Heart right ventricle (tissue), 16 donors: ENCODE measurements at regions of chr15 and their contacts with region 1.

Region 1: DNA sequence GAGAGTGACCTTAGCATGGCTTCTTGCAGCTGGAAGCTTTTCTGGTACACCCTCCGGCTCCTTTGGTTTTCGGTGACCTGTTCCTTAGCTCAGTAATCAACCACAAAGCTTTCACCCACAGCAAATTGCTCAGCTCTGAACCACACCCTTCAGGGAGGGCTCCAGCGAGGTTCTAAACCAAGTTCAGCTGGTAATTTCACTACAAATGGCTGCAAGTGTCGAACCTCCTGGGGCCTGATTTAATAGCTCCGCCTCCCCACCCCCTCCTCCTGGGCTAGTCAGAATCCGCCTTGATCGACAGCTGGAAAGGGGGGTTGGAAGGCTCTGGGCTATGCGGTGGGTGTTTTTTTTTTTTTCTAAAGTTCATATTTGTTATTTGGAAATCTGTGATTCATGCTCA is 150.9 kb upstream of the MCTP2 start:
- DNase-seq: peak; percentile 35 to 36
- ATAC-seq: peak; percentile 41 to 82 (median 60)
- H3K4me3 ChIP-seq: no peak overlapping the region
- H3K27ac ChIP-seq: peak overlapping the region in 3 of 10 donors; percentile 14 to 67 (median 53)
- H3K4me1 ChIP-seq: peaks cover 0 to 4% (median 0%) of the 10 kb centered on the region in 9 donors
- H3K27me3 ChIP-seq: peaks cover 0 to 12% (median 0%) of the 10 kb centered on the region in 7 donors
- CTCF ChIP-seq: no peak

Region 2: GRCh38 chr15:94119923-94120775 is 39.7 kb after region 1 on chr15:
- intact Hi-C with region 1: no loop called
- DNase-seq: peak in 1 of 2 donors; percentile 73
- ATAC-seq: peak; percentile 90 to 97 (median 94)
- H3K4me3 ChIP-seq: no peak overlapping the region
- H3K27ac ChIP-seq: peak overlapping the region in 8 of 10 donors; percentile 1 to 81 (median 54)
- H3K4me1 ChIP-seq: peaks cover 0 to 17% (median 0%) of the 10 kb centered on the region in 9 donors
- H3K27me3 ChIP-seq: no peaks in the 10 kb centered on the region
- CTCF ChIP-seq: peak; percentile 77 to 95 (median 85)

Region 3: DNA sequence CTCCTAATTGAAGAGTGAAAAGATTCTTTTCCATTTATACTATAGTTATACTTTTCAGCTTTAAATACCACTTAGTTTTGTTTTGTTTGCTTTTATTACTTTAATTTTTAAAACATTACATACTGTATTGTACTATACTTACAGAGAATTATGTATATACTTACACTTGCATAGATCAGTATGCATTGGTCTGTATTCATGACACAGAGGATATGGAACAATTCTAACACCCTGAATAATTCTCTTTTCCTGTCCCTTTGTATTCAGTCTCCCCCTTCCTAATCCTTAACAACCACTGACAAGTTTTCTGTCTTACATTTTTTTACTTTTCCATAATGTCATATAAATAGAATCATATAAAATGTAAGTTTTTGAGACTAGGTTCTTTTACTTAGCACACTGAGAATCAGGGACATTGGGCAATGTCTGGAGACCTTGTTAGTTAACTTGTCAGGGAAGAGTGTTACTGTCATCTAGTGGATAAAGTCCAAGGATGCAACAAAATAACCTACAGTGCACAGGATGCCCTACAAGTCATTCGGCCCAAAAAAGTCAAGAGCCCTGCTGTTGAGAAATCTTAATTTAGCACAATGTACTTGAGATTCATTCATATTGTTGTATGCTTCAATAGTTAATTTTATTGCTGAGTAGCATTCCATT is 55.2 kb after region 1 on chr15:
- intact Hi-C with region 1: loop called in 1 of 10 experiments (anchors 10 kb)
- DNase-seq: no peak
- ATAC-seq: no peak
- H3K4me3 ChIP-seq: no peak overlapping the region
- H3K27ac ChIP-seq: no peak overlapping the region
- H3K4me1 ChIP-seq: no peaks in the 10 kb centered on the region
- H3K27me3 ChIP-seq: peaks cover 0 to 23% (median 0%) of the 10 kb centered on the region in 7 donors
- CTCF ChIP-seq: no peak